GM12878 (cell line): ENCODE measurements at regions of chr6 and their contacts with region 1.

Region 1: GRCh38 chr6:41705996-41706835 is 29.2 kb downstream of the TFEB start:
- DNase-seq: peak; percentile 87
- ATAC-seq: peak; percentile 90
- H3K4me3 ChIP-seq: peak overlapping the region; percentile 85
- H3K27ac ChIP-seq: peak overlapping the region; percentile 99
- H3K4me1 ChIP-seq: peaks cover 55% of the 10 kb centered on the region
- H3K27me3 ChIP-seq: no peaks in the 10 kb centered on the region
- CTCF ChIP-seq: peak; percentile 82 to 96 (median 91)
- EP300 ChIP-seq: peak; percentile 93 to 97
- POLR2A ChIP-seq: peak; percentile 51; the same call in 1 of the 2 replicates
- RAD21 ChIP-seq: peak; percentile 48

Region 2: GRCh38 chr6:40563111-40563510 is 1143.1 kb before region 1 on chr6:
- CTCF ChIA-PET with region 1: no interaction called
- POLR2A ChIA-PET with region 1: no interaction called
- RAD21 ChIA-PET with region 1: no interaction called
- SMC1A ChIA-PET with region 1: no interaction called
- in situ Hi-C with region 1: no loop called
- intact Hi-C with region 1: no loop called
- DNase-seq: no peak
- ATAC-seq: no peak
- H3K4me3 ChIP-seq: no peak overlapping the region
- H3K27ac ChIP-seq: no peak overlapping the region
- H3K4me1 ChIP-seq: no peaks in the 10 kb centered on the region
- H3K27me3 ChIP-seq: no peaks in the 10 kb centered on the region; a peak in 1 of 4 replicates
- CTCF ChIP-seq: no peak
- EP300 ChIP-seq: no peak
- POLR2A ChIP-seq: no peak
- RAD21 ChIP-seq: no peak

Region 3: DNA sequence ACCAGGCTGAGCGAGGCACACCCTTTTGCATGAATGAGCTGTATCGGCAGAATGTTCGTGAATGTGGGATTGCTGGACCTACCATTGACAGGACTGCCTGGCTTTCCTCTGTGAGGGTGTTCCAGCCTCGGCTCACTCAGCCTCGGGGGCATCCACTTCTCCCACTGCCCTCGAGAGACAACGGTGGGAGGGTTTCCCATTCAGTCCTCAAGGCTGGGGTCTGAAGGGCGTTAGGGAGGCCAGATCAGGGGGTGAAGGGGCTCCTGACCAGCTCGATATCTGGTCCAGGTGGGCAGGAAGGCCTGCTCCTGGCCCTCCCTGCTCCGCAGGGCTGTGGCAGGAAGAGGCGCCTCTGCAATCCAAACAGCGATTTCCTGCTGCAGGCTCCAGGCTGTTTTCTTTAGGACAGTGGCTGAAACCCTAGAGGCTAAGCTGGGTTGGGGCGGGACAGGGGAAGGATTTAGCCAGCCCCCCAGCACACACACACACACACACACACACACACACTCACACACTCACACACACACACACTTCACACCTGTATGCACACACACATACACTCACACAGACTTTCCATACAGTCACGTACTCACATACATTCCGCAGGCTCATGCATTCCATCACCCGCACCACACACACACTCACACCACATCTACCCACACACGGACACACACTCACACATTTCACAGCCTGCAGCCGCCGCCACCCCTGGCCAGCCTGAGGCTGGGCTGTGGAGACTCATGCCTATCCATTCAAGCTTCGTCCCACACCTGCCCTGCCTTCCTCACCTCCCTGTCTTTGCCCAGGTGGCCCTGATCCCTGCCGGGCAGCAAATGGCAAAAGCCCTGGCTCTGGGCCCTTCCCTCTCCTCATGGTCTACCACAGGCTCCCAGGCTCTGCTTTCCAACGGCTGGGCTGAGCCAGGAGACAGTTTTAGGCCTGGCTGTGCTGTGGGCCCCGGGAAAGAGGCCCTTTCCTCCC is 50.2 kb before region 1 on chr6:
- CTCF ChIA-PET with region 1: no interaction called
- POLR2A ChIA-PET with region 1: no interaction called
- RAD21 ChIA-PET with region 1: no interaction called
- SMC1A ChIA-PET with region 1: no interaction called
- in situ Hi-C with region 1: no loop called
- intact Hi-C with region 1: no loop called
- DNase-seq: no peak
- ATAC-seq: no peak
- H3K4me3 ChIP-seq: no peak overlapping the region
- H3K27ac ChIP-seq: no peak overlapping the region
- H3K4me1 ChIP-seq: no peaks in the 10 kb centered on the region
- H3K27me3 ChIP-seq: peaks cover 3 to 5% of the 10 kb centered on the region in 2 experiments; a peak in 3 of 4 replicates
- CTCF ChIP-seq: no peak
- EP300 ChIP-seq: no peak
- POLR2A ChIP-seq: no peak
- RAD21 ChIP-seq: no peak

Region 4: GRCh38 chr6:41779793-41780545 is 73.8 kb after region 1 on chr6 and contains the start of gene FRS3:
- CTCF ChIA-PET with region 1: interaction called, 15 read pairs
- POLR2A ChIA-PET with region 1: no interaction called
- RAD21 ChIA-PET with region 1: interaction called, 6 read pairs
- SMC1A ChIA-PET with region 1: interaction called, 4 read pairs
- in situ Hi-C with region 1: no loop called
- intact Hi-C with region 1: loop called (anchors 5 kb)
- DNase-seq: peak; percentile 78
- ATAC-seq: peak; percentile 95
- H3K4me3 ChIP-seq: peak within 1 kb of the TSS; percentile 74
- H3K27ac ChIP-seq: no peak within 1 kb of the TSS
- H3K4me1 ChIP-seq: peaks cover 18% of the 10 kb centered on the region
- H3K27me3 ChIP-seq: no peaks in the 10 kb centered on the region
- CTCF ChIP-seq: peak; percentile 94 to 99 (median 97); a peak in 5 of 6 replicates
- EP300 ChIP-seq: 0 out of 4 replicates have a peak, but pooled peaks of 1 of the 2 experiments have one; percentile 30
- POLR2A ChIP-seq: no peak
- RAD21 ChIP-seq: peak; percentile 97
- polyA plus RNA-seq, gene FRS3: 0.05 to 0.09 TPM

Region 5: GRCh38 chr6:43247113-43247999 is 1541.1 kb after region 1 on chr6:
- CTCF ChIA-PET with region 1: no interaction called
- POLR2A ChIA-PET with region 1: no interaction called
- RAD21 ChIA-PET with region 1: no interaction called
- SMC1A ChIA-PET with region 1: no interaction called
- in situ Hi-C with region 1: no loop called
- intact Hi-C with region 1: no loop called
- DNase-seq: no peak
- ATAC-seq: peak; percentile 97
- H3K4me3 ChIP-seq: peak overlapping the region; percentile 73
- H3K27ac ChIP-seq: peak overlapping the region; percentile 46
- H3K4me1 ChIP-seq: peaks cover 27% of the 10 kb centered on the region
- H3K27me3 ChIP-seq: peaks cover 8 to 12% of the 10 kb centered on the region in 2 experiments
- CTCF ChIP-seq: no peak
- EP300 ChIP-seq: no peak
- POLR2A ChIP-seq: peak; percentile 60
- RAD21 ChIP-seq: no peak